A549 (cell line): ENCODE measurements at regions of chr15 and their contacts with region 1.

Region 1: GRCh38 chr15:56835718-56836171 is 82.7 kb upstream of the TCF12 start:
- DNase-seq: no peak
- ATAC-seq: no peak
- H3K4me3 ChIP-seq: no peak overlapping the region
- H3K27ac ChIP-seq: no peak overlapping the region
- H3K4me1 ChIP-seq: peaks cover 19% of the 10 kb centered on the region; the same call in 2 of the 3 replicates
- CTCF ChIP-seq: no peak
- EP300 ChIP-seq: no peak
- POLR2A ChIP-seq: no peak
- RAD21 ChIP-seq: no peak

Region 2: GRCh38 chr15:56699743-56700142 is 136.0 kb before region 1 on chr15:
- CTCF ChIA-PET with region 1: no interaction called
- POLR2A ChIA-PET with region 1: no interaction called
- DNase-seq: no peak
- ATAC-seq: no peak
- H3K4me3 ChIP-seq: no peak overlapping the region
- H3K27ac ChIP-seq: no peak overlapping the region
- H3K4me1 ChIP-seq: no peaks in the 10 kb centered on the region
- CTCF ChIP-seq: no peak
- EP300 ChIP-seq: no peak
- POLR2A ChIP-seq: no peak
- RAD21 ChIP-seq: no peak

Region 3: GRCh38 chr15:56821721-56822425 is 13.9 kb before region 1 on chr15:
- CTCF ChIA-PET with region 1: interaction called, 10 read pairs
- POLR2A ChIA-PET with region 1: no interaction called
- DNase-seq: peak; percentile 58 to 80
- ATAC-seq: peak; percentile 88 to 97
- H3K4me3 ChIP-seq: no peak overlapping the region
- H3K27ac ChIP-seq: peak overlapping the region in 1 of 2 experiments; percentile 52; a peak in 2 of 6 replicates
- H3K4me1 ChIP-seq: peaks cover 7% of the 10 kb centered on the region
- CTCF ChIP-seq: peak; percentile 78
- EP300 ChIP-seq: no peak
- POLR2A ChIP-seq: no peak
- RAD21 ChIP-seq: peak; percentile 84 to 96